ENCODE measurements at regions of chr1 and their contacts with region 1.

Region 1: GRCh38 chr1:61337981-61338848 is 255.9 kb downstream of the NFIA start:
- DNase-seq: peak; percentile 73
- ATAC-seq: peak; percentile 96
- H3K4me3 ChIP-seq: peak overlapping the region in 1 of 2 experiments; percentile 24; a peak in 2 of 4 replicates
- H3K27ac ChIP-seq: peak overlapping the region; percentile 30; the same call in 1 of the 2 replicates
- H3K4me1 ChIP-seq: peaks cover 12 to 21% of the 10 kb centered on the region in 2 experiments
- H3K27me3 ChIP-seq: no peaks in the 10 kb centered on the region
- CTCF ChIP-seq: peak; percentile 71 to 87 (median 80)
- POLR2A ChIP-seq: no peak
- RAD21 ChIP-seq: peak; percentile 92

Region 2: GRCh38 chr1:60978421-60979357 is 359.5 kb before region 1 on chr1:
- CTCF ChIA-PET with region 1: no interaction called
- POLR2A ChIA-PET with region 1: no interaction called
- RAD21 ChIA-PET with region 1: no interaction called
- intact Hi-C with region 1: loop called (anchors 5 kb)
- DNase-seq: no peak
- ATAC-seq: peak; percentile 95
- H3K4me3 ChIP-seq: no peak overlapping the region
- H3K27ac ChIP-seq: no peak overlapping the region
- H3K4me1 ChIP-seq: no peaks in the 10 kb centered on the region
- H3K27me3 ChIP-seq: no peaks in the 10 kb centered on the region
- CTCF ChIP-seq: peak; percentile 71 to 74 (median 74); a peak in 5 of 6 replicates
- POLR2A ChIP-seq: no peak
- RAD21 ChIP-seq: peak; percentile 88

Region 3: DNA sequence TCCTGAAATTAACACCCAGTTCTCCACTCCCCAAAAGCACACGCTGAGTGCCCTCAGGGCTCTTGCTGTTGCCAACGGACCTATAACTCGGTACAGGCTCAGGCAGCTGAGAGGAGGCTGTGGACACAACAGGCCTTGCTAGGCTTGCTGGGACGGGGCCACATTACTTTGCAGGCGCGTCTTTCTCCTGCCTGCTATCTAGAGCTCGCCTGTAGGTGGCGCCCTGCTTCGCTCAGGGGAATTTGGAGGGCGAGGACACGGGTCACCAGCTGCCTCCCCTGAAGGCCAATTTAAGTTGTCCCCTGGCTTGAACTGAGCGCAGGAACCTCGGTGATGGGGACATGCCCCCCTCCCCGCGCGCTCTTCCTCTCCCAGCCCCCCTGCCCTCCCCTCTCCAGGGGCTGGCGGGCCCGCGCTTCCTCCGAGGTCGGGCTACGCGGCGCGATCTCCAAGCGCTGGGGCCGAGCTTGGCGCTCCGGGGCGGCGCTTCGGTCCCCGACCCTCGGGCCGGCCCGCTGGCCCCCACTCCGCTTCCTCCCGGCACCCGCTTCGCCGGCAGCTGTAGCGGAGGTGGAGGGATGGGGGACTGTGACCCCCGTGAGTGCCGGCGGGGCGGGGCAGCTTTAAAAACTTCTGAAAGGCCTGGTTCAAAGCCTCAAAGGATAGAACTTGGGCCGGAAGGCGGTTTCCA is 288.2 kb before region 1 on chr1:
- CTCF ChIA-PET with region 1: interaction called, 8 read pairs
- POLR2A ChIA-PET with region 1: no interaction called
- RAD21 ChIA-PET with region 1: no interaction called
- intact Hi-C with region 1: loop called (anchors 2 kb)
- DNase-seq: peak; percentile 73
- ATAC-seq: peak; percentile 90
- H3K4me3 ChIP-seq: peak overlapping the region; percentile 53 to 75
- H3K27ac ChIP-seq: peak overlapping the region; percentile 8; the same call in 1 of the 2 replicates
- H3K4me1 ChIP-seq: peaks cover 0 to 8% of the 10 kb centered on the region in 2 experiments; a peak in 2 of 4 replicates
- H3K27me3 ChIP-seq: no peaks in the 10 kb centered on the region
- CTCF ChIP-seq: peak; percentile 74 to 97 (median 91)
- POLR2A ChIP-seq: no peak
- RAD21 ChIP-seq: peak; percentile 87

Region 4: GRCh38 chr1:61287734-61288133 is 50.5 kb before region 1 on chr1:
- CTCF ChIA-PET with region 1: no interaction called
- POLR2A ChIA-PET with region 1: no interaction called
- RAD21 ChIA-PET with region 1: no interaction called
- intact Hi-C with region 1: no loop called
- DNase-seq: peak; percentile 24
- ATAC-seq: peak; percentile 71
- H3K4me3 ChIP-seq: no peak overlapping the region
- H3K27ac ChIP-seq: no peak overlapping the region
- H3K4me1 ChIP-seq: peaks cover 0 to 19% of the 10 kb centered on the region in 2 experiments; a peak in 3 of 4 replicates
- H3K27me3 ChIP-seq: no peaks in the 10 kb centered on the region
- CTCF ChIP-seq: no peak
- POLR2A ChIP-seq: no peak
- RAD21 ChIP-seq: no peak